A549 (cell line): ENCODE measurements at regions of chr17 and their contacts with region 1.

Region 1: DNA sequence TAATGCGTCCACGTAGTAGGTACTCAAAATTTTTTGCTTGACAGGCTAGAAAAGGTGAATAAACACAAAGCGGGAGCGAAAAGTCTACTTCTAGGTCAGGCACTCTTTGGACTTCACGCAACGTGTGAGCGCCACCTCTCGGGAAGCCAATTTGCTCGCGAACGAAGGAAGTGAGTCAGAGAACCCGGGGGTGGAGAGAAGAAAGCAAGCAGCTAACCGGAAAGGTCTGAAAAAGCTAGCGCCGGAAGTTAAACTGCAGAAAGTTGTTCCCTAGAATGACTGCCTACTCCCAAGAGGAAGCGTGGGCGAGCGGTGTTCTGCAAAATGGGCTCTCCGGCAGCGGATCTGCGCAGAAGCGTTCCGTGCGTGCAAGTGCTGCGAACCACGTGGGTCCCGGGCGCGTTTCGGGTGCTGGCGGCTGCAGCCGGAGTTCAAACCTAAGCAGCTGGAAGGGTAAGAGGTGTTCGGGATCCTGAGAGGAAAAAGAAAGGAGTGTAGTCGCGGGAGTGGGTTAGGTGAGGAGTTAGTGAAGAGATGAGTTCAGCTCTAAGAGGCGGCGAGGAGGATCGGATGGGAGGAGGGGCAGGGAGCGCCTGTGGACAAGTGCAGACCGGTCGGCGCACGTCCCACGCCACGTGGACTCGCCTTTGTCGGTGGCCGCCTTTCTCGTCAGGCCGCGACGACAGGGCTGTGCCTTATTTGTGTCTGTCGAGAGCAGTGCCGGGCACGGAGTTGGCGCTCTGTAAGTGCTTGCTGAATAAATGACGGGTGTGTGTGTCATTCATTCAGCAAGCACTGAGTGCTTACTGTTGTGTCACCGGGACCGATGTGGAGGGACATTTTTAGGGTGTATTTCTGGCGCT is at the start of gene NME1:
- DNase-seq: peak; percentile 99 to 100
- ATAC-seq: peak; percentile 96 to 98
- H3K4me3 ChIP-seq: peak within 1 kb of the TSS; percentile 74
- H3K27ac ChIP-seq: peak within 1 kb of the TSS; percentile 82 to 88
- H3K4me1 ChIP-seq: peaks cover 25% of the 10 kb centered on the region
- CTCF ChIP-seq: peak; percentile 98
- EP300 ChIP-seq: no peak
- POLR2A ChIP-seq: peak; percentile 77
- RAD21 ChIP-seq: peak; percentile 99
- polyA plus RNA-seq, gene NME1: 639 and 782 TPM in 2 replicates

Region 2: GRCh38 chr17:51015145-51015558 is 138.3 kb before region 1 on chr17:
- CTCF ChIA-PET with region 1: interaction called, 12 read pairs
- POLR2A ChIA-PET with region 1: no interaction called
- DNase-seq: no peak
- ATAC-seq: no peak; a peak in 1 of 6 replicates
- H3K4me3 ChIP-seq: no peak overlapping the region
- H3K27ac ChIP-seq: no peak overlapping the region
- H3K4me1 ChIP-seq: no peaks in the 10 kb centered on the region
- CTCF ChIP-seq: no peak
- EP300 ChIP-seq: no peak
- POLR2A ChIP-seq: no peak
- RAD21 ChIP-seq: no peak

Region 3: DNA sequence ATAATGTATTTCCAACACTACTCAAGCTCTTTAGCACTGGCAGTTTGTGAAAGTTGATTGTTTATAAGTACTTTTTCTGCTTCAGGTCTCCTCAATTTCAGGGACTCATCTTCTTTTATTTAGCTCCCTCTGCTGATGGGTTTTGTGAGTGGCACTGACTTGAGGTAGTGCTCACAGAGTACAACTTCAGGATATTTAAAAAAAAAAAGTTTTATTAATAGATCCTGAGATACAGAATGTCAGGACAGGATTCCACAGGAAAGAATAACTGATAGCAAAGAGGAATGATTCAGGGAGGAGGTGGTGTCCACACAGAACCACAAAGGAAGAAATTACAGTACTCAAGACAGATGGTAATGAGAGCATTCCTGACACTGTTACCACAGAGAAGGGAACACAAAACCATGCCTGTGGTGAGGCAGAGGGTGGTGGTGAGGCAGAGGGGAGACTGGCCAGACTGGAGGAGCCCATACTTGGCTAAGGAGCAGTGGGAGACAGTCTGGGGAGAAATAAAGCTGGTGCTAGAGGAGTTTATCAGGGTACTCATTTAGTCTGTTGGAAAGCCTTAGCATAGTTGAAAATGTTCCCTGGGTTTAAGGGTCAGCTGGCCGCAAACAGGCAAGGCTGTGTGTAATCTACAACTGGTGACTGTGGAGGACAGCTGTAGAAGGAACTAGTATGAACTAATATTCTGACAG is 96.5 kb before region 1 on chr17:
- CTCF ChIA-PET with region 1: interaction called, 34 read pairs
- POLR2A ChIA-PET with region 1: interaction called, 4 read pairs
- DNase-seq: peak; percentile 53 to 71
- ATAC-seq: peak; percentile 88 to 91
- H3K4me3 ChIP-seq: no peak overlapping the region
- H3K27ac ChIP-seq: peak overlapping the region in 1 of 2 experiments; percentile 36; a peak in 1 of 6 replicates
- H3K4me1 ChIP-seq: peaks cover 24% of the 10 kb centered on the region
- CTCF ChIP-seq: peak; percentile 85
- EP300 ChIP-seq: no peak
- POLR2A ChIP-seq: no peak
- RAD21 ChIP-seq: peak; percentile 69 to 70

Region 4: GRCh38 chr17:51085185-51085805 is 68.1 kb before region 1 on chr17:
- CTCF ChIA-PET with region 1: interaction called, 15 read pairs
- POLR2A ChIA-PET with region 1: no interaction called
- DNase-seq: peak in 1 of 2 experiments; percentile 21
- ATAC-seq: peak in 1 of 2 experiments; percentile 12; a peak in 1 of 6 replicates
- H3K4me3 ChIP-seq: no peak overlapping the region
- H3K27ac ChIP-seq: peak overlapping the region; percentile 2 to 57; a peak in 3 of 6 replicates
- H3K4me1 ChIP-seq: peaks cover 30% of the 10 kb centered on the region
- CTCF ChIP-seq: no peak
- EP300 ChIP-seq: no peak
- POLR2A ChIP-seq: no peak
- RAD21 ChIP-seq: no peak

Region 5: DNA sequence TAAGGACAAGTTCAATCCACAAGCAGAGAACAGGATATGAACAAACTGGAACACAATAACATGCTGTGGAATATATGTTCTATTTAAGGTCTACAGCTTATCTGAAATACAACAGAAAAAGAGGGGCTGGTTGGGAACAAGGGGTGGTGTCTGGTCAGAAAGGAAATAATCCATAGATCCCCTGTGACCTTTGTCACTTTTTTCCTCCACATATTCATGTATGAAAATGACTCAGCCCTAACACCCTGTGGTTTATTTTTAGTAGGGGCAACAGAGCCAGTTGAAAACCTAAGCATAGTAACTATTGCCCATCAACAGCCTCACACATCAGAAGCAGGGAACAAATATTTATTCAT is 20.5 kb before region 1 on chr17:
- CTCF ChIA-PET with region 1: interaction called, 119 read pairs
- POLR2A ChIA-PET with region 1: no interaction called
- DNase-seq: peak in 1 of 2 experiments; percentile 48
- ATAC-seq: peak; percentile 54 to 74; a peak in 4 of 6 replicates
- H3K4me3 ChIP-seq: no peak overlapping the region
- H3K27ac ChIP-seq: no peak overlapping the region
- H3K4me1 ChIP-seq: peaks cover 14% of the 10 kb centered on the region
- CTCF ChIP-seq: no peak
- EP300 ChIP-seq: no peak
- POLR2A ChIP-seq: no peak
- RAD21 ChIP-seq: no peak